ENCODE measurements at regions of chr13 and their contacts with region 1.

Region 1: DNA sequence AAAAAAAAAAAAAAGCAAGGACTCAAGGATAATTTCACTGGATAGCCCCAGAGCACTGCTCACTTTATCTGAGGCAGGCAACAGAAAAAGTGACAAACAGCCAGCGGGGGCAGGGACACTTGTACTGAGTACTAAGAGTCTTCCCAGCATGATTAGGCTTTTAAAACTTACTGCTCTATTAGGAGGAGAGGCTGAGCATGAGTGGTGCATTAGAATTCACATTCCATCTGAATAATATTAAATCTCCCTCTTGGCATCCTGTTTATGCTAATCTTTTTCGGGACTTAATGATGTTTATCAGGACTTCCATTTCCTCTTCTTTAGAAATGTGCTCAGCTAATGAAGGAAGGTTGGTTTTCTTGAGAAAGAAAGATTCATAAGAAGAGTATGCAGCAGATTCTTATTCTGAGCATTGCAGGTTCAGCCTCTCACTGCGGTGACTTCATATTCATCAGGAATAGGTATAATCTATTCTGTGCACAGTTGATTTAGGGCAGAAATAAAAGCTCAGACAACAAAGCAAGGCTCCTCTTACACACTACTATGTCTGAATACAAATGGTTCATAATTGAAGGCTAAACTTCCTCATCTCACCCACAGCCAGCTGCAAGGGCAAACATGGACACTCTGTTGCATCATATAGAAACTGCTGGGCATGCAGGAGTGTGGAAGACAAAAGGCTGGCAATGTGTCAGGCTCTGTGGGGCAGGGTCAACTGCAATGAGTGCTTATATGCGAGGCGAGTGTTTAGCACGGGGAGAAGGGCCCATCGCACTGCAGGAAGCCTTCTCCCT is 107.0 kb downstream of the KL start:
- DNase-seq: no peak
- H3K4me3 ChIP-seq: no peak overlapping the region
- H3K27ac ChIP-seq: peak overlapping the region; percentile 73 to 85 (median 78)
- H3K4me1 ChIP-seq: peaks cover 54 to 89% (median 85%) of the 10 kb centered on the region in 4 donors
- H3K27me3 ChIP-seq: no peaks in the 10 kb centered on the region
- CTCF ChIP-seq: no peak
- EP300 ChIP-seq: no peak
- POLR2A ChIP-seq: no peak

Region 2: GRCh38 chr13:33537026-33537425 is 413.8 kb after region 1 on chr13:
- intact Hi-C with region 1: loop called (anchors 5 kb)
- DNase-seq: no peak
- H3K4me3 ChIP-seq: peak overlapping the region in 3 of 4 donors; percentile 13 to 31 (median 20)
- H3K27ac ChIP-seq: peak overlapping the region; percentile 40 to 68 (median 60)
- H3K4me1 ChIP-seq: peaks cover 17 to 52% (median 37%) of the 10 kb centered on the region in 4 donors
- H3K27me3 ChIP-seq: no peaks in the 10 kb centered on the region
- CTCF ChIP-seq: no peak
- EP300 ChIP-seq: no peak
- POLR2A ChIP-seq: no peak